ENCODE measurements at regions of chr9 and their contacts with region 1.

Region 1: GRCh38 chr9:15606643-15607472 is 54.0 kb downstream of the CCDC171 start:
- H3K4me3 ChIP-seq: no peak overlapping the region
- H3K27ac ChIP-seq: no peak overlapping the region
- H3K4me1 ChIP-seq: no peaks in the 10 kb centered on the region; the same call in 1 of the 2 replicates
- CTCF ChIP-seq: no peak

Region 2: GRCh38 chr9:15642369-15642962 is 35.6 kb after region 1 on chr9:
- CTCF ChIA-PET with region 1: interaction called, 10 read pairs
- POLR2A ChIA-PET with region 1: no interaction called
- H3K4me3 ChIP-seq: no peak overlapping the region
- H3K27ac ChIP-seq: no peak overlapping the region
- H3K4me1 ChIP-seq: no peaks in the 10 kb centered on the region
- CTCF ChIP-seq: no peak

Region 3: DNA sequence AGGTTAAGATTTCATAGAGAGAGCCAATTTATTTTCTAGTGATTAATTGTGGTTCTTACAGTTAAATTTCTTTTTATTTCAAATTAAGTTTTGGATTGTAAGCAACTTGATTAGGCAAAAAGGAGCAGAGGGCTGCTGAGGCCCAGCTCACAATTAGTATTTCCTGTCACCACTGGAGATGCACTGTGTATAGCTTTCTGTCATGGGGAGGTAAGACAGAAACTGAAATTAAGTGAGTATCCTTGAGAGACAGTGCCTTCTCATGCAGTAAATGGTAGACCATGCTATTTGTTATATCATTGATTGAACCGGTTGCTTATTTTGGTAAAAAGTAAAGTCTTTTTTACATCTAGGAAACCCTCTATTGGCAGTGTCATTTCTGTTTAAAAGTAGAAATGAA is 136.7 kb after region 1 on chr9:
- CTCF ChIA-PET with region 1: no interaction called
- POLR2A ChIA-PET with region 1: no interaction called
- H3K4me3 ChIP-seq: no peak overlapping the region
- H3K27ac ChIP-seq: no peak overlapping the region
- H3K4me1 ChIP-seq: no peaks in the 10 kb centered on the region
- CTCF ChIP-seq: no peak